Activated T-helper 1 cell treated with anti-CD3 and anti-CD28 coated beads, Interleukin-12 subunit alpha, Interleukin-12 subunit beta, Interleukin-2, Interleukin-4 antibody, amounts not matched to agents 30 ng/mL and 10 ng/mL and 1 ng/mL, durations not matched to agents 14 hours and 24 hours and 36 hours (primary cell): ENCODE measurements at regions of chr11 and their contacts with region 1.

Region 1: GRCh38 chr11:108467091-108467823 is at the start of gene C11orf65:
- DNase-seq: peak; percentile 94
- H3K4me3 Mint-ChIP-seq: peak within 1 kb of the TSS; percentile 98
- H3K27ac Mint-ChIP-seq: peak within 1 kb of the TSS; percentile 100
- H3K4me1 Mint-ChIP-seq: peaks cover 23% of the 10 kb centered on the region
- H3K27me3 Mint-ChIP-seq: peaks cover 3% of the 10 kb centered on the region
- total RNA-seq, gene C11orf65: 0.57 and 0.64 TPM in 2 replicates

Region 2: DNA sequence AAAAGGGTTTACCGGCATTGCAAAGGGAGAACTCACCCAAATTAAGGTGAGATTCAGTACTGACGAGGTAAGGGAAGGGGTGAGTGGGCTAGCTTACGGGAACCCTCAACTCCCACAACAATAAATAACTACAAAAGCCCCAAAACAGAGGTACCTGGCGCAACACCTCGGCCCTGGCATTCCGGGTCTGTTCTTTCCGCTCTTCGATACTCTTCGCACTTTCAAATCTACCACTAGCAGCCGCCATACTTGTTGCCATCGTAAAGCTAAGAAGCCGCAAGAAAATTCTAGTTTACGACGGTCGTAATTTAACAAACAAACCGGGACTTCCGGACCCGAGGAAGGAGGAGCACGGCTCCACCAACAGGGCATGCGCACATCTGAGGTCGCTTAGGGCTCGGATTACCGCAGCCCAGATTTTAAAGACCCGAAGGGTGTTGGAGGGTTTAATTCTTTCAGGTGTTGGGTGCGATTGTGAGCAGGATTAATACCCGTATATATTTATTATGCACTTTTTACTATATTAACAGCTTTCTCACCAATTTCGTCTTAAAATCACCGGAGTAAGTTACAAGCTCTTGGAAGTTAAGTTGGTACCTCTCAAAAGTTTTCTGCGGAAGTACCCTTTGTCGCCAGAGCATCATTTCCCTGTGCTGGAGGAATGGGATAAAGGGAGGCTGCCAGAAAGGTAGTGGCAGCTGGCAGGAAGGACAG is 1009.5 kb before region 1 on chr11 and contains the start of gene CWF19L2:
- intact Hi-C with region 1: loop called (anchors 1 kb)
- DNase-seq: peak; percentile 88
- H3K4me3 Mint-ChIP-seq: peak within 1 kb of the TSS; percentile 91
- H3K27ac Mint-ChIP-seq: peak within 1 kb of the TSS; percentile 87
- H3K4me1 Mint-ChIP-seq: peaks cover 28% of the 10 kb centered on the region
- H3K27me3 Mint-ChIP-seq: peaks cover 9% of the 10 kb centered on the region
- total RNA-seq, gene CWF19L2: 16.5 and 16.7 TPM in 2 replicates

Region 3: GRCh38 chr11:108121274-108122155 is 345.7 kb before region 1 on chr11 and contains the start of gene ACAT1:
- intact Hi-C with region 1: loop called (anchors 5 kb)
- DNase-seq: peak; percentile 95
- H3K4me3 Mint-ChIP-seq: peak within 1 kb of the TSS; percentile 97
- H3K27ac Mint-ChIP-seq: peak within 1 kb of the TSS; percentile 82
- H3K4me1 Mint-ChIP-seq: peaks cover 36% of the 10 kb centered on the region
- H3K27me3 Mint-ChIP-seq: no peaks in the 10 kb centered on the region
- total RNA-seq, gene ACAT1: 52.8 and 56.8 TPM in 2 replicates

Region 4: GRCh38 chr11:108237058-108237481 is 230.2 kb before region 1 on chr11:
- intact Hi-C with region 1: loop called (anchors 1 kb)
- DNase-seq: no peak
- H3K4me3 Mint-ChIP-seq: peak overlapping the region; percentile 68
- H3K27ac Mint-ChIP-seq: peak overlapping the region; percentile 78
- H3K4me1 Mint-ChIP-seq: peaks cover 60% of the 10 kb centered on the region
- H3K27me3 Mint-ChIP-seq: peaks cover 4% of the 10 kb centered on the region

Region 5: DNA sequence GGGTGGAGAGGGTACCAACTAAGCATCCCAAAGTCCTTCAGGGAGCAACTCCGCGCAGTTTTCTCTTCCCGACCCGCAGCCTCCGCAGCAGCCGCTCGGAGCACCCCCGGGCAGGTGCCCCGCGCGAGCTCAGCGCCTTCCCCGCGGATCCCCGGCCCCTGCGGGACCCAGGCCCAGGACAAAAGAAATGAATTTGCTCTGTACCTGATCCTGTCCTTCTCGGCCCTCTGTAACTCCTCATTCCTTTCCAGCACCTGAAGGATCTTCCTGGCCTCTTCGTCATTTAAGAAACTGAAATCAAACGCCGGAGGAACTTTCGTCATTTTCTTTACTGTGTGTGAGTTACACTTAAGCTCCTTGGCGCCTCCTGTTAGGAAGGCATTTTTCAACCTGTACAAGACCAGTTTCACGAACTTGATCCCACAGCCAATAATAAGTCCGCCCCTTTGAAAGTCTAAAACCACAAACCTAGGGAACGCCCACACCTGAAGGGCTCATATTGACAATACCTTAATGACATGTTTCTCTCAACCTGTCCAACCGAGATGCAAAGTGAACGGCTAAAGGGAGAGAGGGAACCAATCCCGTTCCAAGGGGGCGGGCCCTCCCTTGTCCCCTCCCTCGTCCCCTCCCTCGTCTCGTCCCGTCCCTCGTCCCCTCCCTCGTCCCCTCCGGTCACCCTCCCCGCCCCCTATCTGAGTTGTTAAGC is 126.1 kb after region 1 on chr11 and contains the start of gene EXPH5:
- intact Hi-C with region 1: loop called (anchors 1 kb)
- DNase-seq: peak; percentile 76
- H3K4me3 Mint-ChIP-seq: peak within 1 kb of the TSS; percentile 89
- H3K27ac Mint-ChIP-seq: peak within 1 kb of the TSS; percentile 75
- H3K4me1 Mint-ChIP-seq: peaks cover 23% of the 10 kb centered on the region
- H3K27me3 Mint-ChIP-seq: peaks cover 29% of the 10 kb centered on the region
- total RNA-seq, gene EXPH5: 0.56 and 0.65 TPM in 2 replicates

Region 6: GRCh38 chr11:108647701-108648527 is 180.7 kb after region 1 on chr11:
- intact Hi-C with region 1: loop called (anchors 2 kb)
- DNase-seq: peak; percentile 47
- H3K4me3 Mint-ChIP-seq: no peak overlapping the region
- H3K27ac Mint-ChIP-seq: no peak overlapping the region
- H3K4me1 Mint-ChIP-seq: no peaks in the 10 kb centered on the region
- H3K27me3 Mint-ChIP-seq: peaks cover 4% of the 10 kb centered on the region

Region 7: DNA sequence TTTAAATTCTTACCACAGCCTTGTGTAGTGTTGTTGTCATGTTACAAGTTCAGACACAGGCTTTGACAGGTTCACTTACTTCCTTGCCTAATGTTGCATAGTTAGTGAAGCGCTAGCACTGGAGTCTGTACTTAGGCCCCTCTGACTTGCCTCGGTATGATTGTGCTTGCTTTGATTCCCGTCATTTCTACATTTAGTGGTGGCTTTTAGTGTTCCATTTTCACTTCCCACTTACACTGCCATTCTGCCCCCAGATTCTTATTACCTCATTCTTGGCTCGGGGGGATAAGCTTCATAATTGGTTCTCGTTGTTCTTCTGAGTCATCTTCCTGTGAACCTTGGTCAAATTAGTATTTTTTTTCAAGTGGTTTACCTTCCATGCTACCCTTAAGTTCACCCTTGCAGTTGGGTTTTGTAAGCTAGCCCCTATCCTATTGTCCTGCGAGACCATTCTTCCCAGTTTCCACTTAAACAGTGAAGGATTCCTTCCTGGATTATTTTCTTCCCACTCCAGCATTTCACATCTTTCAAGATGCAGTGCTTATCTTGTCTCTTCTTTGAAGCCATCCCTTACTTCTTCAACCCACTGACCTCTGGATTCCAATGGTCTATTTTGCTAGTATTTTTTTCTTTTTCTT is 266.3 kb after region 1 on chr11:
- intact Hi-C with region 1: loop called (anchors 5 kb)
- DNase-seq: peak; percentile 25
- H3K4me3 Mint-ChIP-seq: peak overlapping the region; percentile 55
- H3K27ac Mint-ChIP-seq: peak overlapping the region; percentile 88
- H3K4me1 Mint-ChIP-seq: peaks cover 44% of the 10 kb centered on the region
- H3K27me3 Mint-ChIP-seq: no peaks in the 10 kb centered on the region